H1 (cell line): ENCODE measurements at regions of chr22 and their contacts with region 1.

Region 1: DNA sequence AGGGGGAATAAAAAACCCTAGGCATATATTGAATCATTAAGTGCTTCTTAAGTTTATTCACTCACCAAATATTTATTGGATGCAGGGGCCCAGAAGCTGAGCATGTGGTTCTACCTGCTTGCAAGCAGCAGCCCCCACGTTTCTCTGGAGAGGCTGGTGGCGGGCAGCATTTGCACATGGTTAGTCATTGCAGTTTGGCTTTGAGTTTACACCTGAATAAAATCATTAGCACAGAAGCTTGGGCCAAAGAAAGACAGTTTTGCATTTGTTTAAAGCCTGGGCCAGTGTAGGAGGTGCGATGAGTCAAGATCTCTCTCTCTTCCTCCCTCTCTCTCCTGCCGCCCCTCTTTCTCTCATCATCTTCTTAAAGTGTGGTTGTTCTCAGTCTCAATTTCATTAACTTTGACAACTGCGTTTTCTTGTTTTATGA is 72.6 kb downstream of the C22orf31 start:
- DNase-seq: no peak
- H3K4me3 ChIP-seq: peak overlapping the region in 1 of 4 experiments; percentile 39; a peak in 2 of 8 replicates
- H3K27ac ChIP-seq: peak overlapping the region; percentile 63; the same call in 1 of the 2 replicates
- H3K4me1 ChIP-seq: peaks cover 8 to 27% (median 23%) of the 10 kb centered on the region in 4 experiments
- H3K27me3 ChIP-seq: no peaks in the 10 kb centered on the region
- CTCF ChIP-seq: no peak
- EP300 ChIP-seq: no peak
- POLR2A ChIP-seq: peak in 1 of 2 experiments; percentile 39; a peak in 2 of 3 replicates
- RAD21 ChIP-seq: 0 out of 4 replicates have a peak, but pooled peaks of 1 of the 2 experiments have one; percentile 4

Region 2: DNA sequence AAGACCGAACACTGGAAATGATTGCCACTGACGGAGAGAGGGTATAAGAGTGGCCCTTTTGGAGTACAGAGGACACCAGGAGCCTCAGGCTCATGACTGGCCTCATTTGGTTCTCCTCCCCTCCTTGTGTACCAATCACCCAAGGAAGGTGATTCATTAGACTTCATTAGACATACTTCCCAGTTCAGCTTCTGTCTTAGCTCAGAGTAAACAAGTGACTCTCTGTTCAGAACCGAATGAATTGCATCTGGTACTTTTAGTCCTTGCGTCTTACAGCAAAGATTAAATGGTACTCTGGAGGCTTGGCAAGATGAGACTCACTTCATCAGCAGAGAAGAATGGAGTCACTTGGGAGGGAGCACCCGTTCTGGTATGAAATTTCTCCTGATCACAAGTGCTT is 30.4 kb before region 1 on chr22:
- CTCF ChIA-PET with region 1: no interaction called
- POLR2A ChIA-PET with region 1: no interaction called
- DNase-seq: no peak
- H3K4me3 ChIP-seq: no peak overlapping the region
- H3K27ac ChIP-seq: no peak overlapping the region
- H3K4me1 ChIP-seq: peaks cover 2 to 11% (median 4%) of the 10 kb centered on the region in 4 experiments
- H3K27me3 ChIP-seq: no peaks in the 10 kb centered on the region
- CTCF ChIP-seq: no peak
- EP300 ChIP-seq: no peak
- POLR2A ChIP-seq: no peak
- RAD21 ChIP-seq: no peak

Region 3: GRCh38 chr22:28999510-28999909 is 10.5 kb after region 1 on chr22:
- CTCF ChIA-PET with region 1: interaction called, 3 read pairs
- POLR2A ChIA-PET with region 1: interaction called, 15 read pairs
- DNase-seq: no peak
- H3K4me3 ChIP-seq: peak overlapping the region in 1 of 4 experiments; percentile 1; a peak in 1 of 8 replicates
- H3K27ac ChIP-seq: peak overlapping the region; percentile 33
- H3K4me1 ChIP-seq: peaks cover 10 to 19% (median 14%) of the 10 kb centered on the region in 4 experiments
- H3K27me3 ChIP-seq: no peaks in the 10 kb centered on the region
- CTCF ChIP-seq: no peak
- EP300 ChIP-seq: no peak
- POLR2A ChIP-seq: no peak
- RAD21 ChIP-seq: no peak

Region 4: GRCh38 chr22:29004647-29005371 is 15.8 kb after region 1 on chr22:
- CTCF ChIA-PET with region 1: interaction called, 3 read pairs
- POLR2A ChIA-PET with region 1: interaction called, 13 read pairs
- DNase-seq: peak in 1 of 2 experiments; percentile 75
- H3K4me3 ChIP-seq: peak overlapping the region in 3 of 4 experiments; percentile 21 to 46 (median 25); a peak in 4 of 8 replicates
- H3K27ac ChIP-seq: peak overlapping the region; percentile 77
- H3K4me1 ChIP-seq: peaks cover 12 to 32% (median 16%) of the 10 kb centered on the region in 4 experiments
- H3K27me3 ChIP-seq: no peaks in the 10 kb centered on the region
- CTCF ChIP-seq: no peak
- EP300 ChIP-seq: no peak
- POLR2A ChIP-seq: no peak
- RAD21 ChIP-seq: no peak